GM12878 (cell line): ENCODE measurements at regions of chr11 and their contacts with region 1.

Region 1: DNA sequence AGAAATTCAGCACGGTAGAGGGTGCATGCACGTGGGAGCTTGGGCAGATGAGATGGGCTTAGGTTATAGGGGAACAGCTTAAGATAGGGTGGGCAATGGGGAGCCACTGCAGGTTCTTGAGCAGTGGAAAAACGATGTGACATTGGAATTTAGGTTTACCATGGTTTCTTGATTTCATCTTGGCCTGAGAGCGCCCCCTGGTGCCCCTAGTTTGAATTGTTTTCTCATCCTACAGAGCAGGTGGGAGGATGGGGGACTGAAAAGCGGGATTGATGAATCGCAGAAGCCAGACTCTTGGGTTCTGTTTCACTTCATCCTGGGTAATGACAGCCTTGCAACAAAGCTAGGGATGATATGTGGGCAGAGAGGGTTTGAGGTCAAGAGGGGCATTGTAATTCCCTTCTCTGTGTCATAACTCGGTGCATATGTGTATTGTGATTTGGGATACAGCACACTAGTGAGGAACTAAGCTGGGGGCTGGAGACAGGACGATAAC is 6.7 kb upstream of the MCAM start:
- DNase-seq: peak; percentile 37
- ATAC-seq: no peak
- H3K4me3 ChIP-seq: no peak overlapping the region
- H3K27ac ChIP-seq: no peak overlapping the region
- H3K4me1 ChIP-seq: peaks cover 27% of the 10 kb centered on the region
- H3K27me3 ChIP-seq: no peaks in the 10 kb centered on the region
- CTCF ChIP-seq: peak; percentile 73 to 86 (median 82)
- EP300 ChIP-seq: no peak
- POLR2A ChIP-seq: no peak
- RAD21 ChIP-seq: peak; percentile 79

Region 2: DNA sequence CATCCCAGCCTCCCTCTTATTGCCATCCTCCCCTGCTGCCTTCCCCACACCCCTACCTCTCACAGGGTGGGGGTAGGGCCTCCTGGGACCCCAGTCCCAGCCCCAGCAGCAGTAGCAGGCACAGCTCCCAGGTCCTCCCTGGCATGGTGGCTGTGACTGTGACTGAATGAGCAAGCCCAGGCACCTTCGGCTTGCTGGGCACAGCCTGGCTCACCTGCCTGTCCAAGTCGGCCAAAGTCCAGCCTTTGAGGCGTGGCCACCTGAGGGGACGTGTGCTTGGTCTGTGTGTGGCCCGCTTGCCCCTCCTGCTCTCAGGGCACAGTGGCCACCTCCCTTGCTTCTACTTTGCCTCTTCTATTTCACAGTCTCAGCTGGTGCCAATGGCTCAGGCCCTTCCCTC is 644.1 kb before region 1 on chr11 and contains the start of gene TREH:
- CTCF ChIA-PET with region 1: no interaction called
- POLR2A ChIA-PET with region 1: no interaction called
- RAD21 ChIA-PET with region 1: no interaction called
- SMC1A ChIA-PET with region 1: no interaction called
- in situ Hi-C with region 1: no loop called
- intact Hi-C with region 1: no loop called
- DNase-seq: no peak
- ATAC-seq: no peak
- H3K4me3 ChIP-seq: no peak within 1 kb of the TSS
- H3K27ac ChIP-seq: no peak within 1 kb of the TSS
- H3K4me1 ChIP-seq: no peaks in the 10 kb centered on the region
- H3K27me3 ChIP-seq: 0 out of 4 replicates have a peak, but pooled peaks cover 0 to 1% of the 10 kb centered on the region in 2 experiments
- CTCF ChIP-seq: no peak
- EP300 ChIP-seq: no peak
- POLR2A ChIP-seq: no peak
- RAD21 ChIP-seq: no peak
- polyA plus RNA-seq, gene TREH: not detected

Region 3: GRCh38 chr11:119067371-119068222 is 256.0 kb before region 1 on chr11 and contains the start of gene VPS11:
- CTCF ChIA-PET with region 1: interaction called, 10 read pairs
- POLR2A ChIA-PET with region 1: interaction called, 5 read pairs
- RAD21 ChIA-PET with region 1: interaction called, 4 read pairs
- SMC1A ChIA-PET with region 1: interaction called, 3 read pairs
- in situ Hi-C with region 1: no loop called
- intact Hi-C with region 1: loop called (anchors 2 kb)
- DNase-seq: peak; percentile 78
- ATAC-seq: peak; percentile 98
- H3K4me3 ChIP-seq: peak within 1 kb of the TSS; percentile 80
- H3K27ac ChIP-seq: peak within 1 kb of the TSS; percentile 59
- H3K4me1 ChIP-seq: no peaks in the 10 kb centered on the region
- H3K27me3 ChIP-seq: no peaks in the 10 kb centered on the region
- CTCF ChIP-seq: no peak
- EP300 ChIP-seq: 0 out of 4 replicates have a peak, but pooled peaks have one; percentile 17 to 29
- POLR2A ChIP-seq: peak; percentile 85
- RAD21 ChIP-seq: no peak
- polyA plus RNA-seq, gene VPS11: 18.3 to 18.9 TPM

Region 4: DNA sequence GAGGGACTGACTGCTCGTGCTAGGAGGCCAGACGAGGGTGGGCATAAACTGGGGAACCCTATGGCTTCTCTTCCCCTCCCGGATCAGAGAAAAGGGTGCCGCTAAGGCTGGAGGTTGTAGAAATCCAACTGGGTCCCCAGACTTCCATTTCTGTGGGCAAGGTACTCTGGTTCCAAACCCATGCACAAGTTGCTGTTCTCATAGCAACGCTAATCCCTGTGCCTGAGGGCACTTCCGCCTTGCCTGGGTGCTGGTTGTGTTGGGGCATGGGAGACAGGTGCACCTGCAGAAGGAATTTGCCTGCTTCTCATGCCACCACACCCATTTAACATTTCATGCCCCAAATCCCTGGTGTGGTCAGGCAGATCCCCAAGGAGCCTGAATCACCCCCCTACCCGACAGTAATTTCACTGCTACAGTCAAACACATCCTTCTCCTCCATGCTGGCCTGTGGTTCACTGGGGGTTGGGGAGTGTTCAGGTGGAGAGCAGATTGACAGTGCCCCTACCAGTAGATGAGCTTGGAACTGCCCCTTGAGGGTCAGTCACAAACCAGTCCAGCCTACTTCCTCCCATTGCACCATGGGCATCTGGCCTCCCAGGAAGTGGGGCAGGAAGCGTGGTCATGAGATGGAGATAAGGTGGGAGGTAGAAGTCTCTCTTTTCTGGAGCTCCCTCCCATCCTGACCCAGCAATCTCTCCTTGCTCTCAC is 215.3 kb before region 1 on chr11:
- CTCF ChIA-PET with region 1: interaction called, 10 read pairs
- POLR2A ChIA-PET with region 1: interaction called, 4 read pairs
- RAD21 ChIA-PET with region 1: interaction called, 7 read pairs
- SMC1A ChIA-PET with region 1: interaction called, 3 read pairs
- in situ Hi-C with region 1: no loop called
- intact Hi-C with region 1: no loop called
- DNase-seq: no peak
- ATAC-seq: peak; percentile 44
- H3K4me3 ChIP-seq: peak overlapping the region; percentile 96
- H3K27ac ChIP-seq: peak overlapping the region; percentile 58
- H3K4me1 ChIP-seq: peaks cover 19% of the 10 kb centered on the region
- H3K27me3 ChIP-seq: no peaks in the 10 kb centered on the region
- CTCF ChIP-seq: no peak
- EP300 ChIP-seq: no peak
- POLR2A ChIP-seq: no peak
- RAD21 ChIP-seq: no peak

Region 5: GRCh38 chr11:119205574-119206510 is 117.7 kb before region 1 on chr11 and contains the start of gene CBL:
- CTCF ChIA-PET with region 1: interaction called, 63 read pairs
- POLR2A ChIA-PET with region 1: interaction called, 20 read pairs
- RAD21 ChIA-PET with region 1: interaction called, 26 read pairs
- SMC1A ChIA-PET with region 1: interaction called, 23 read pairs
- in situ Hi-C with region 1: no loop called
- intact Hi-C with region 1: loop called (anchors 5 kb)
- DNase-seq: peak; percentile 47
- ATAC-seq: peak; percentile 91
- H3K4me3 ChIP-seq: peak within 1 kb of the TSS; percentile 93
- H3K27ac ChIP-seq: peak within 1 kb of the TSS; percentile 88
- H3K4me1 ChIP-seq: peaks cover 9% of the 10 kb centered on the region
- H3K27me3 ChIP-seq: no peaks in the 10 kb centered on the region
- CTCF ChIP-seq: peak; percentile 85 to 92 (median 91)
- EP300 ChIP-seq: no peak
- POLR2A ChIP-seq: peak; percentile 81
- RAD21 ChIP-seq: peak; percentile 62
- polyA plus RNA-seq, gene CBL: 3.9 to 7.6 TPM

Region 6: DNA sequence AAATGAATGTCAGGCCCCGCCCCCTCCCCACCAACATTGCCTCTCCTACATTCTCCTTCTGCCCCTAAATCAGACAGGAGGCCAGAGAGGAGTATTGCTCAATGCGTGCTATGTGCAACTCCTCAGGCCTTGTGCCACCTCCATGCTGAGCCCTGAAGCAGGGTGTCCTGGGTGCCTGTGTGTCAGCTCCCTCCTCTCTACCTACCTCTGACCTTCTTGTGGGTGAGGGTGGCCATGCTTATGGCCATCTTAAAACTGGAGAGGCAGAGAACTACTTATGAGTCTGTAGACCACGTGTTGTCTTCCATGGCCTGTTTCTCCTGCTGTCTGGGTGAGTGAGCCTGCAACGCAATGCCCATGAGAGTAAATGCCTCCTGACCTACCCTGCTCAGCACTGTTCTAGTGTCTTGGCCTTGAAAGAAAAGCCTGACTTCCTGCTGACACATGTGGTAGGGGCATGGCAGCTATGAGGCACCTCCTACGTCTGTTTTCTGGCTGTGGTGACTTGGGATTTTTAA is 17.2 kb before region 1 on chr11:
- CTCF ChIA-PET with region 1: interaction called, 45 read pairs
- POLR2A ChIA-PET with region 1: interaction called, 4 read pairs
- RAD21 ChIA-PET with region 1: interaction called, 3 read pairs
- SMC1A ChIA-PET with region 1: interaction called, 8 read pairs
- in situ Hi-C with region 1: no loop called
- intact Hi-C with region 1: no loop called
- DNase-seq: no peak
- ATAC-seq: peak; percentile 28; the same call in 2 of the 3 replicates
- H3K4me3 ChIP-seq: no peak overlapping the region
- H3K27ac ChIP-seq: no peak overlapping the region
- H3K4me1 ChIP-seq: no peaks in the 10 kb centered on the region
- H3K27me3 ChIP-seq: no peaks in the 10 kb centered on the region
- CTCF ChIP-seq: no peak
- EP300 ChIP-seq: no peak
- POLR2A ChIP-seq: no peak
- RAD21 ChIP-seq: no peak